SK-N-SH (cell line): ENCODE measurements at regions of chr1 and their contacts with region 1.

Region 1: DNA sequence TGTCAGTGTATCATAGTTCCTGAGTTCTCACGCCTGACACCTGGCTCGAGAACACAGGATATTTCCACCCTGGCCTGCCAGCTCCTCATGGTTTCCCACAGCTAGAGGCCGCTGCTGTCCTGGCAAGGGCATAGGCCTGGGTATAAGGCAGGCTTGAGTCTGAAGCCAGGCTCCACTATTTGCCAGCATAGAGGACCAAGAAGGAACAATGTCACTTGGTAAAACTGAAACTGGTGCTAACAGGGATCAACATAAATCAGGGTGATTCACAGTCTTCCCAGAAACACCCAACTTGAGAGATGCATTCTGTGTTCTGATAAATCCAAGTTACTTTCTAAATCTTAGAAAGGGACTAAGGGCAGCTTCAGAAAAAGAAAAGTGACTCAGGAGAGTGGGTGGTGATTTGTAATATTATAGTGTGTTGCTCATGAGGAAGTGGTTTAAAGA is 6.9 kb upstream of the S100A2 start:
- DNase-seq: peak; percentile 78
- H3K4me3 ChIP-seq: no peak overlapping the region
- H3K27ac ChIP-seq: peak overlapping the region; percentile 4 to 77; a peak in 3 of 4 replicates
- H3K4me1 ChIP-seq: peaks cover 12 to 15% of the 10 kb centered on the region in 2 experiments
- H3K27me3 ChIP-seq: no peaks in the 10 kb centered on the region
- CTCF ChIP-seq: peak; percentile 96
- EP300 ChIP-seq: no peak
- RAD21 ChIP-seq: peak; percentile 91

Region 2: GRCh38 chr1:153324912-153325311 is 247.7 kb before region 1 on chr1:
- CTCF ChIA-PET with region 1: no interaction called
- POLR2A ChIA-PET with region 1: no interaction called
- DNase-seq: no peak
- H3K4me3 ChIP-seq: no peak overlapping the region
- H3K27ac ChIP-seq: no peak overlapping the region
- H3K4me1 ChIP-seq: no peaks in the 10 kb centered on the region
- H3K27me3 ChIP-seq: no peaks in the 10 kb centered on the region
- CTCF ChIP-seq: no peak
- EP300 ChIP-seq: no peak
- RAD21 ChIP-seq: no peak

Region 3: DNA sequence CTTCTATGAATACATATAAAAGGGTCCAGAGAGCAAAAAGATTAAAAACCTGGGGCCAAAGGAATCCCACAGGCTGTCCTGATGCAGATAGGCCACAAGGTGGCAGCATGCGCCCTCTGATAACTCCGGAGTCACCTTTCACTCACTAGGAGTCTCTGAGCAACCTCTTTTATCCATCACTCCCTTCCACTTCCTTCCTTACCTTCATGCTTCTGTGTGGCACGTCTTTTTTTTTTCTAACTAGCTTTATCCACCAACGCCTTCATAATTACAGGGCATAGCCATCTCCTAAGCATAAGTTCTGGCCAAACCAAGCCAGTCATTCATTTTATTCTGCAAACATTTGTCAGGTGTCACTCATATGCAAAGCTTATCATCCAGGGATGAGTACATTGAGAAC is 220.1 kb before region 1 on chr1:
- CTCF ChIA-PET with region 1: interaction called, 12 read pairs
- POLR2A ChIA-PET with region 1: no interaction called
- DNase-seq: peak; percentile 77
- H3K4me3 ChIP-seq: no peak overlapping the region; a peak in 1 of 4 replicates
- H3K27ac ChIP-seq: no peak overlapping the region
- H3K4me1 ChIP-seq: no peaks in the 10 kb centered on the region
- H3K27me3 ChIP-seq: peaks cover 64% of the 10 kb centered on the region; the same call in 1 of the 2 replicates
- CTCF ChIP-seq: peak; percentile 93
- EP300 ChIP-seq: no peak
- RAD21 ChIP-seq: peak; percentile 92

Region 4: DNA sequence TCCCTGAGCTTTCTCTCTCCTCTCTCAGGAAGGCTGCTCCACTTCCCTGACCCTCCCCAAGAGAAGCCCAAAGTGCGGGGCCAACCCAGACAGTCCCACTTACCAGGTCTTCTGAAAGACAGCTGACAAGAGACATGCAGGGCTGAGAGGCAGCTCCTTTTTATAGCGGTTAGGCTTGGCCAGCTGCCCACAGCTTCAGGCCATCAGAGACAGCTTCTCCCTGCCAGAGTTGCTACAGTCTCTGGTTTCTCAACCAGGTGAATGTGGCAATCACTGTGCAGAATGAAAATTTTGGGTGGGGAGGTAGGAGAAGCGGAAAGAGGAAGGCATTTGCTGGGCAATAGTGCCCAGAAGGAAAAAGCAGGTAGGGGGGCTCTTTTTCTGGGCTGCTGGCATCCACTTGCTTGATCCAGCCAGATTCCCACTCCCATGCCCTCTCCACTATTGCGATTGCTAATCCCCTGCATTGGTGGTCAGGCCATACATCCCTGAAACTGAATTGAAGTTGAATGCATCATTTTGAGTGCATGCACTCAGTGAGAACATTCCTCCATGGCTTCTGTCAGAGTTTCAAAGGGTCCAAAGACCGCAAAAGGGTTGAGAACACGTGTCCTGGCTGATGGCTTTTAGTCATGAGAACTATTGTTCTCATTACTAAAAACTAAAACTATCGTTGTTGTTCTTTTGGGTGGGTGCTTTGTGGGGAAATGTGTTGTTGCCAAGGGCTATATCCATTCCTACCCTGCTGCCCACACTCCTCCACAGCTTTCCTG is 181.5 kb before region 1 on chr1 and contains the start of gene S100A8:
- CTCF ChIA-PET with region 1: no interaction called
- POLR2A ChIA-PET with region 1: no interaction called
- DNase-seq: no peak
- H3K4me3 ChIP-seq: no peak within 1 kb of the TSS
- H3K27ac ChIP-seq: no peak within 1 kb of the TSS
- H3K4me1 ChIP-seq: no peaks in the 10 kb centered on the region
- H3K27me3 ChIP-seq: peaks cover 32% of the 10 kb centered on the region
- CTCF ChIP-seq: no peak
- EP300 ChIP-seq: no peak
- RAD21 ChIP-seq: no peak
- polyA plus RNA-seq, gene S100A8: not detected in 2 replicates

Region 5: GRCh38 chr1:153526132-153526543 is 46.5 kb before region 1 on chr1:
- CTCF ChIA-PET with region 1: interaction called, 24 read pairs
- POLR2A ChIA-PET with region 1: no interaction called
- DNase-seq: no peak
- H3K4me3 ChIP-seq: no peak overlapping the region
- H3K27ac ChIP-seq: peak overlapping the region in 1 of 2 experiments; percentile 34; a peak in 1 of 4 replicates
- H3K4me1 ChIP-seq: peaks cover 7 to 21% of the 10 kb centered on the region in 2 experiments; a peak in 3 of 4 replicates
- H3K27me3 ChIP-seq: no peaks in the 10 kb centered on the region
- CTCF ChIP-seq: no peak
- EP300 ChIP-seq: peak in 1 of 2 experiments; percentile 32; a peak in 1 of 4 replicates
- RAD21 ChIP-seq: no peak

Region 6: GRCh38 chr1:153553830-153554541 is 18.6 kb before region 1 on chr1:
- CTCF ChIA-PET with region 1: interaction called, 62 read pairs
- POLR2A ChIA-PET with region 1: no interaction called
- DNase-seq: no peak
- H3K4me3 ChIP-seq: no peak overlapping the region
- H3K27ac ChIP-seq: peak overlapping the region; percentile 55 to 71
- H3K4me1 ChIP-seq: peaks cover 21 to 22% of the 10 kb centered on the region in 2 experiments; a peak in 3 of 4 replicates
- H3K27me3 ChIP-seq: no peaks in the 10 kb centered on the region
- CTCF ChIP-seq: no peak
- EP300 ChIP-seq: no peak
- RAD21 ChIP-seq: no peak

Region 7: DNA sequence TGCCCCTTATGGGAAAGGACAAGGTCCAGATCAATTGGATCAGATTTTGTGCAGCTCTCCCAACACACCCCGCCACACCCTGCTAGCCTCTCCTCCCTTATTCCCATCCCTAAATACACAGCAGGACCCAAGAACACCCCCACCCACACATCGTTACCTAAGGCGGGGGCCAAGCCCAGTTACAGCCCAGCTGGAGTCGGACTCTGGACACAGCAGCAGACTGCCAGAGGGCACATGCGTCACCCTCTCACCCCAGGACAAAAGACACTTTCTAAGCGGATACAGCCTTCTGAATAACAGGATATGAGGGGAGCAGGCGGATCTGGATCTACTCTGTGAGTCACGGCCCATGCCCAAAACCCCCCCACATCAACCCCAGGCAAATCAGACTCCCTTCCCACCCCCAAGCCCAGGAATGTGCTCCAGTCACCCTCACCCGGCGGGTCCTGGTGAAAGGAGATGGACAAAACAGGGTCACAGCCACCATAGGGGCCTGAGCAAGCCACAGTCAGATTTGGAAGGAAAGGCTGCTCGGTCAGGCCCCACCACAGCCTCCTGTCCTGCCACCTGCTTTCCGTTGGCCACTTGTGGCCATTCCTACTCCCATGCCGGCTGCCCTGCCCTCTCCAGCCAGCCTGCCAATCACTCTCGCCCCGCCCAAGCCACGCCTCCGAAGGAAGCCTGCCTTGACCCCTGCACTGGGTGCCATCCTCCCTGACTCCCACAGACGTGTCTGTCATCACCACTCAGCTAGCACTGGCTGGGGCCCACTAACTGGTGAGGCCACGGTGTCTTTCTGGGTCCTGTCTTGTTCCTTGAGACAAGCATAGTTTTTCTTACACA is 36.4 kb after region 1 on chr1:
- CTCF ChIA-PET with region 1: interaction called, 100 read pairs
- POLR2A ChIA-PET with region 1: no interaction called
- DNase-seq: no peak
- H3K4me3 ChIP-seq: peak overlapping the region; percentile 58 to 87
- H3K27ac ChIP-seq: peak overlapping the region; percentile 58 to 84
- H3K4me1 ChIP-seq: peaks cover 15 to 23% of the 10 kb centered on the region in 2 experiments; a peak in 3 of 4 replicates
- H3K27me3 ChIP-seq: no peaks in the 10 kb centered on the region
- CTCF ChIP-seq: no peak
- EP300 ChIP-seq: peak in 1 of 2 experiments; percentile 8; a peak in 1 of 4 replicates
- RAD21 ChIP-seq: no peak

Region 8: GRCh38 chr1:153639280-153639679 is 66.7 kb after region 1 on chr1:
- CTCF ChIA-PET with region 1: interaction called, 13 read pairs
- POLR2A ChIA-PET with region 1: interaction called, 12 read pairs
- DNase-seq: no peak
- H3K4me3 ChIP-seq: no peak overlapping the region
- H3K27ac ChIP-seq: no peak overlapping the region
- H3K4me1 ChIP-seq: no peaks in the 10 kb centered on the region; a peak in 1 of 4 replicates
- H3K27me3 ChIP-seq: no peaks in the 10 kb centered on the region
- CTCF ChIP-seq: no peak
- EP300 ChIP-seq: no peak
- RAD21 ChIP-seq: no peak